ENCODE measurements at regions of chr17 and their contacts with region 1.

Region 1: DNA sequence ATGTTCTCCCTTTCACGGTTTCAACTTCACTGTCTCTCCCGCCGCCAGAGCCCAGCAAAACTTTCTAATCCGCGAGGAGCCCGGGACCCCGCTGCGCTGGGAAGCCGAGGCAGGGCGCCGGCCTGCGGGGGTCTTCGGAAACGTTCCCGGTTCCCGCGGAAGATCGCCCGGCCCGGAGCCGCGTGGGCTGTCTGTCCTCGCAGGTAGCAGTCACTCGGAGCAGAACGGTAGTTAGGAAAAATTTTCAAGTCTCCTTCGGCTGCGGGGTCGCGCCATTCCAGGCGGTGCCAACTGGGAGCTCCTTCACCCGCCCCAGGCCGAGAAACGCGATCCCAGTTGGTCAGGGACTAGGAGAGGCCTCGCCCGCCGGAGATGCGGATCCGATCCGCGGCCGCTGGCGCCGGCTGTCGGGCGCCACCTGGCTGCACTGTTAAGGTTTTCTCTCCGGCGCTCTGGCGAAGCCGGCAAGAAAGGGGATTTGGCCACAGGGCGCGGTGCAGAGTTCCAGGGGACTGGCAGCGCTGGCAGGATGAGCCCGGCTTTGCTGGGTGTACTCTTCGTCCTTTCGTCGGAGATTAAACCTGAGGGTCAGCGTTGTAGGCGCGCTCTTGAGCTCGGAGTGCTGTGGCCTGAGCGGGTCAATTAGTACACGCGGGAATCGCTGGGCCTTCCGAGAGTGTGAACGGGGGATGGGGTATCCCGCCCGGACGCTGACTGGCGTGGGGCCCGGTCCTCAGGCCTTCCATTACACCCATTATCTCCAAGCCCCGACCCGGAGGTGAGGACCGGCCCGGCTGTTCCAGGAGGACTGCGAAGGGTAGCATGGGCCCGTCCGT is 135.4 kb downstream of the KCNJ12 start:
- DNase-seq: peak; percentile 87 to 94
- ATAC-seq: peak; percentile 97
- H3K4me3 ChIP-seq: peak overlapping the region; percentile 55 to 73
- H3K27ac ChIP-seq: no peak overlapping the region
- H3K4me1 ChIP-seq: no peaks in the 10 kb centered on the region
- H3K27me3 ChIP-seq: no peaks in the 10 kb centered on the region

Region 2: DNA sequence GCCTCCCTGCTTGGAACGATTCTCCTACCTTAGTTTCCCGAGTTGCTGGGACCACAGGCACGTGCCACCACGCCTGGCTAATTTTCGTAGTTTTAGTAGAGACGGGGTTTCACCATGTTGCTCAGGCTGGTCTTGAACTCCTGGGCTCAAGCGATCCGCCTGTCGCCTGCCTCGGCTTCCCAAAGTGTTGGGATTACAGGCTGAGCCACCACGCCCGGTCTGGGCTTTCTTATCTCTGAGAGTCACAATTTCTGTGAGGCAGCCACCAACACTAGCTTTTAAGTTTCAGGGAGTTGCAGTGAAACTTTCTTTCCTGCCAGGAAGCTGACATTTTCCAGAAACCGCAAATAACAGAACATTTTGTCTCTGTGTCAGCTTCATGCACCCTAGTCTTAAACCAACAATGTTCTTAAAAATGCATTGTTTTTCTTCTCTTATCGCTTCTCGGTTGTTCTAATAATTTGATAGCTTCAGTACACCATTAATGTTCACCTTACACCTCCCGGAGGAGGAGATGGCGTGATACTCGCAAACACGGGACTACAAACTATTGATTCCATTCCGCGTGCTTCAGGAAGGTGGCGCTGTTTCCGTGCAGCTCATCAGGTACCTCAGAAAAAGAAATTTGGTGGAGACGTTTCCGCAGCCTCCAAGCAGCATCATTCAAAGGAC is 392.2 kb before region 1 on chr17:
- intact Hi-C with region 1: loop called in 1 of 2 experiments (anchors 5 kb)
- DNase-seq: peak; percentile 72 to 84
- ATAC-seq: peak; percentile 87
- H3K4me3 ChIP-seq: no peak overlapping the region
- H3K27ac ChIP-seq: no peak overlapping the region
- H3K4me1 ChIP-seq: no peaks in the 10 kb centered on the region
- H3K27me3 ChIP-seq: no peaks in the 10 kb centered on the region

Region 3: GRCh38 chr17:21214015-21214776 is 297.4 kb before region 1 on chr17 and contains the start of gene TMEM11:
- intact Hi-C with region 1: no loop called
- DNase-seq: peak; percentile 98 to 99
- ATAC-seq: peak; percentile 99
- H3K4me3 ChIP-seq: peak within 1 kb of the TSS; percentile 60 to 78
- H3K27ac ChIP-seq: peak within 1 kb of the TSS; percentile 45 to 57
- H3K4me1 ChIP-seq: no peaks in the 10 kb centered on the region
- H3K27me3 ChIP-seq: no peaks in the 10 kb centered on the region
- total RNA-seq, gene TMEM11: 16.8 to 17.7 TPM

Region 4: DNA sequence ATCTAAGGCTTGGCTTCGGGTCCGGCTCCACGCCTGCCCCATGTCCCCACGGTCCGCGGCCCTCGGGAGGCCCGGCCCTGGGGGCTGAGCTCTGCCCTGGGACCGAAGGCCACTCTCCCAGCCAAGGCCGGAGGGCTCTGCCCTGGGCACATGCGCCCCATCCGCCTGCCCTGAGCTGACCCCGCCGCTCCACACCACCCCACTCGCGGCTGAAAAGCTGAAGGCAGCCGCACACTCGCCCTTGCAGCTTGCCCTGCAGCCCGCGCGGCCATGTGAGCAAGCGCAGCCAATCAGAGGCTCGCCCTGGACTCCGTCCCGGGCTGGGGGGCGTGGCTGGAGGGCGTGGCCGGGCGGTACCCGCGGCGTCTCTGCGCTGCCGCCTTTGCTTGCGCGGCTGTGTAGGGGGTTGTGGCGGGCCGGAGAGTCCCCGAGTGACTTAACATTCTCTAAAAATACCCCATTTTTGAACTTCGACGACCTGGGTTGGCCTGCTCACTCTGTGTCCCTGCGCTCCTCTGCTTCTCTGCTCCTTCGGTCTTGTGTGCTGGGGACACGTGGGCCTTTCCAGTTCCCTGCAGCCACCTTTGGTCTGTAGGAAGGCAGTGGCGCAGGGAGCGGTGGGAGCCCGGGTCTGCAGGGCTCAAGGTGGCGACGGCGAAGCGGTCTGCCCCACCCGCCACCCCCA is 235.9 kb before region 1 on chr17:
- intact Hi-C with region 1: loop called (anchors 2 kb)
- DNase-seq: peak; percentile 97 to 99
- ATAC-seq: peak; percentile 96
- H3K4me3 ChIP-seq: peak overlapping the region; percentile 44 to 69
- H3K27ac ChIP-seq: no peak overlapping the region
- H3K4me1 ChIP-seq: no peaks in the 10 kb centered on the region
- H3K27me3 ChIP-seq: no peaks in the 10 kb centered on the region

Region 5: GRCh38 chr17:21287596-21288449 is 223.8 kb before region 1 on chr17:
- intact Hi-C with region 1: no loop called
- DNase-seq: peak; percentile 98 to 99
- ATAC-seq: peak; percentile 76
- H3K4me3 ChIP-seq: peak overlapping the region in 1 of 2 donors; percentile 16
- H3K27ac ChIP-seq: peak overlapping the region; percentile 34 to 78
- H3K4me1 ChIP-seq: peaks cover 3 to 4% of the 10 kb centered on the region in 2 donors
- H3K27me3 ChIP-seq: no peaks in the 10 kb centered on the region

Region 6: GRCh38 chr17:21313320-21313719 is 198.3 kb before region 1 on chr17:
- intact Hi-C with region 1: loop called in 1 of 2 experiments (anchors 5 kb)
- DNase-seq: peak; percentile 30 to 65
- ATAC-seq: no peak
- H3K4me3 ChIP-seq: no peak overlapping the region
- H3K27ac ChIP-seq: no peak overlapping the region
- H3K4me1 ChIP-seq: no peaks in the 10 kb centered on the region
- H3K27me3 ChIP-seq: no peaks in the 10 kb centered on the region

Region 7: DNA sequence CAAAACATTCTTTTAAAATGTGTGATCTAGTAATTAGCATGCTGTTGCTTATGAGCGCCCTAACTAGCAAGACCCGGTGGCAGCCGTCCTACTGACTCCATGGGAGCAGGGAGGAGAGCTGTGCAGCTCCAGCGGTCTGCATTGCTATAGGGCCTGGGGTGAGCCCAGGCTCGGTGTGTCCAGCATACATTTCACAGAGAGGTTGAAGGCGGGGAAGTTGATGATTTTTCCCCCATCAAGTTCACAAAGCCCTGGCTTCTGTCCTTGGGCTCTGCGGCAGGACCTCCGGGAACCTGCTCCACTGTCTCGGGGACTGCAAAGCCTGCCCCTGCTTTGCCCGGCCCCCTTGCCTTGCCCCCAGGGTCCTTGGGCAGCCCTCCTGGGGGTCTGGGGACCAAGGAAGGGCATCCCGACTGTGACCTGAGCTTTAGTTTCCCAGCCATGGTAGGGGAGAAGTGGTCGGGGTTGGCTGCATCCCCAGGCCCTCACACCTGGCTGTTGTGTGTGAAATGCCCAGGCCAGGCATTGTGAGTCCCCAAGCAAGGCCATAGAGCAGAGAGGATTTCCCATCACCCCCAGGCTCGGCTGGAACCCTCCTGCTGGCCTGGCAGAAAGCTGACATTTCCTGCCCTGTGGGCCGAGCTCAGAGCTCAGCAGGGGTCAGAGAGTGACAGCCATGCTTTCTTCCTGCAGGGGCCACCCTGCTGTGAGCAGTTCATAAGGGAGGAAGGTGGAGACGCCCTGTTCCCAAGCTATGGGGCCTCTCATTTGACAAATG is 110.6 kb before region 1 on chr17:
- intact Hi-C with region 1: no loop called
- DNase-seq: no peak
- ATAC-seq: no peak
- H3K4me3 ChIP-seq: no peak overlapping the region
- H3K27ac ChIP-seq: no peak overlapping the region
- H3K4me1 ChIP-seq: no peaks in the 10 kb centered on the region
- H3K27me3 ChIP-seq: no peaks in the 10 kb centered on the region

Region 8: GRCh38 chr17:21457051-21458026 is 54.2 kb before region 1 on chr17:
- intact Hi-C with region 1: loop called (anchors 2 to 5 kb)
- DNase-seq: peak; percentile 91 to 98
- ATAC-seq: peak; percentile 93
- H3K4me3 ChIP-seq: no peak overlapping the region
- H3K27ac ChIP-seq: no peak overlapping the region
- H3K4me1 ChIP-seq: no peaks in the 10 kb centered on the region
- H3K27me3 ChIP-seq: no peaks in the 10 kb centered on the region

Region 9: DNA sequence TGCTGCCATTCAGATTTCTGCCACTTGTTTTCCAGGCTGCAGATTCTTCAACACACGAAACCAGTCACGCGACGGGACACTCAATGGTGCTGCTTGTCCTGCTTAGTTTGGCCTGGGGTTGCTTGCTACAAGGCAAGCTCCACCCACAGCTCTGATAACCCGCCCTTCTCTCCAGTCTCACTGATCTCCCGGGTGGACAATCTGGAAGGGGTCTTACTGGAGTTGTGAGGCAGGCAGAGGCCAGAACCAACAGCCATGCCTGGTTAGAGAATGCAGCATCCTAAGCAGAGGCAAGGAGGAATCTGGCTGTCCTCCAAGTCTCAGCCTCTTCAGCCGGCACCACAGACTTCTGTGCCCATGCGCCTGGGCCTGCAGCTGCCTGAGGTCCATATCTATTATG is 16.3 kb before region 1 on chr17:
- intact Hi-C with region 1: no loop called
- DNase-seq: no peak
- ATAC-seq: no peak
- H3K4me3 ChIP-seq: no peak overlapping the region
- H3K27ac ChIP-seq: no peak overlapping the region
- H3K4me1 ChIP-seq: no peaks in the 10 kb centered on the region
- H3K27me3 ChIP-seq: no peaks in the 10 kb centered on the region

Measured in aorta (tissue), 5 donors.